ENCODE measurements at regions of chr2 and their contacts with region 1.

Region 1: DNA sequence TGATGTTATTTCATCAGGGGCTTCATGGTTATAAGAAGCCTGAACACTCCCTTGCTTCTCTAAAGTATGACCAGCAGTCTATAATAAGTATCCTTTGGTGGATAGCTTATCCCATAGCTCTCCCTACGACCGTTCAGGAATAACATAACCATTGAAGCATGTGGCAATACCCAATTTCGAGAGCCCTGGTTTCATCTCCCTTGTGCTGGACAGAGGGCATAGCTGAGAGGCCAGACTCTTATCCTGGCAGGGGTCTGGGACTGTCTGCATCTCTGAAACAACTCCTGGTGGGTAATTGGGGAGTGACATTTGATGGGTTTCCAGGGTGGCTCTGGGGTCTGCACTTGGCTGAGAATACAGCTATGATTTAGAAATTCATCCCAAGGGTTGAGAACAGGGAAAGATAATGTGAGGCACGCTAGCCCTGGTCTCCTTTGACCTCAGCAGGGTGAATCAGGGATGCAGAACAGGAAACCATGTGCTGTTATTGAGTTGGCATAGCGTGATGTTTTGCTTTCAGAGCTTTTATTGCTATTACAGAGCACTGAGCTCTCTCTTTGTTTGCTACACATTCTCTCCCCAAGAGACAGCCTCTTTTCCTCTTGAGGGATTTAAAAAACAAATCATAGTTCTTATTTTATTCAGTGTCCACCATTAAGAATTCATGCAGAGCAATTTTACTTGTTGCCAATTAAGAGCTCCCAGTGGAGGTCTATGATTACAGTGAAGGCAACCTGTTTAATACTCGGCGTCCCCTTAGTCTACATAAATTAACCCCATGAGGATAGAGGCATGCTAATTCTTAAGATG is 274.5 kb downstream of the NCKAP5 start:
- DNase-seq: no peak
- ATAC-seq: no peak
- H3K4me3 ChIP-seq: no peak overlapping the region
- H3K4me3 Mint-ChIP-seq: no peak overlapping the region
- H3K27ac ChIP-seq: no peak overlapping the region
- H3K27ac Mint-ChIP-seq: no peak overlapping the region
- H3K4me1 ChIP-seq: no peaks in the 10 kb centered on the region
- H3K4me1 Mint-ChIP-seq: no peaks in the 10 kb centered on the region
- H3K27me3 ChIP-seq: no peaks in the 10 kb centered on the region
- H3K27me3 Mint-ChIP-seq: no peaks in the 10 kb centered on the region
- CTCF ChIP-seq: no peak

Region 2: GRCh38 chr2:133352719-133353118 is 59.0 kb after region 1 on chr2:
- CTCF ChIA-PET with region 1: no interaction called
- POLR2A ChIA-PET with region 1: no interaction called
- intact Hi-C with region 1: loop called in 1 of 2 experiments (anchors 2 kb)
- DNase-seq: no peak
- ATAC-seq: no peak
- H3K4me3 ChIP-seq: no peak overlapping the region
- H3K4me3 Mint-ChIP-seq: no peak overlapping the region
- H3K27ac ChIP-seq: no peak overlapping the region
- H3K27ac Mint-ChIP-seq: no peak overlapping the region
- H3K4me1 ChIP-seq: no peaks in the 10 kb centered on the region
- H3K4me1 Mint-ChIP-seq: no peaks in the 10 kb centered on the region
- H3K27me3 ChIP-seq: no peaks in the 10 kb centered on the region
- H3K27me3 Mint-ChIP-seq: peaks cover under 1% of the 10 kb centered on the region
- CTCF ChIP-seq: no peak